ENCODE measurements at regions of chr19 and their contacts with region 1.

Region 1: GRCh38 chr19:4791170-4792018 is at the start of gene FEM1A:
- DNase-seq: peak; percentile 98
- H3K4me3 Mint-ChIP-seq: peak within 1 kb of the TSS; percentile 89
- H3K27ac Mint-ChIP-seq: peak within 1 kb of the TSS; percentile 88
- H3K4me1 Mint-ChIP-seq: peaks cover 9% of the 10 kb centered on the region
- H3K27me3 Mint-ChIP-seq: no peaks in the 10 kb centered on the region
- total RNA-seq, gene FEM1A: 23.8 and 24.8 TPM in 2 replicates

Region 2: DNA sequence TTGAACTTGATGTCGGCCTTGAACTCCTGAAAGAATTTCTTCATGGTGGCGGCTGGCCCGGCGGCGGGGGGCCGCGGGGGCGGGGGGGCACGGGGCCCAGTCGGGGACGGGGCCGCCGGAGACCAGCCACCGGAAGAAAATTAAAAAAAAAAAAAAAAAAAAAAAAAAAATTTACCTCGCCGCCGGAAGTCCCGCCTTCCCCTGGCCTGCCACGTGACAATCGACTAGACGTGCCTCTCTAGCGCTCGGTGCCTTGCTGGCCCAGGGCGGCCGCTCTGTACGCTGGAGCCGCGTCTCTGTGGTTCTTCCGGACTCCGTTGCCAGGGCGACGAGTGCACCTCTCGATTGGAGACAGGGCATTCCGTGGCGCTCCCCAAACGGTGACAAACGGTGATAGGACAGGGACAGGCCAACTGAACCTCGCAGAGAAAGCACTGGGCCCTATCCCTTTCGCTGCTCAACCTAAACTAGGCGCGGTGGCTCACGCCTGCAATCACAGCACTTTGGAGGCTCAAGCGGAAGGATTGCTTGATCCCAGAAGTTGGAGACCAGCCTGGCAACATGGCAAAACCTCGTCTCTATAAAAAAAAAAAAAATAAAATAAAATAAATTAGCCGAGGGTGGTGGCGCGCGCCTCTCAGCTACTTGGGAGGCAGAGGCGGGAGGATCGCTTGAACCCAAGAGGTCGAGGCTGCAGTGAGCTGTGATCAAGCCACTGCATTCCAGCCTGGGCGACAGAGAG is 333.6 kb before region 1 on chr19 and contains the start of gene UBXN6:
- intact Hi-C with region 1: no loop called
- DNase-seq: peak; percentile 98
- H3K4me3 Mint-ChIP-seq: peak within 1 kb of the TSS; percentile 92
- H3K27ac Mint-ChIP-seq: peak within 1 kb of the TSS; percentile 94
- H3K4me1 Mint-ChIP-seq: peaks cover 11% of the 10 kb centered on the region
- H3K27me3 Mint-ChIP-seq: peaks cover 2% of the 10 kb centered on the region
- total RNA-seq, gene UBXN6: 49.5 and 51.0 TPM in 2 replicates

Region 3: GRCh38 chr19:4669723-4670480 is 121.5 kb before region 1 on chr19 and contains the start of gene MYDGF:
- intact Hi-C with region 1: loop called (anchors 1 kb)
- DNase-seq: peak; percentile 91
- H3K4me3 Mint-ChIP-seq: peak within 1 kb of the TSS; percentile 91
- H3K27ac Mint-ChIP-seq: peak within 1 kb of the TSS; percentile 77
- H3K4me1 Mint-ChIP-seq: peaks cover 5% of the 10 kb centered on the region
- H3K27me3 Mint-ChIP-seq: no peaks in the 10 kb centered on the region
- total RNA-seq, gene MYDGF: 97.1 and 98.0 TPM in 2 replicates

Region 4: GRCh38 chr19:4732680-4733114 is 58.7 kb before region 1 on chr19:
- intact Hi-C with region 1: loop called (anchors 1 kb)
- DNase-seq: peak; percentile 47
- H3K4me3 Mint-ChIP-seq: peak overlapping the region; percentile 13
- H3K27ac Mint-ChIP-seq: no peak overlapping the region
- H3K4me1 Mint-ChIP-seq: peaks cover 15% of the 10 kb centered on the region
- H3K27me3 Mint-ChIP-seq: peaks cover 7% of the 10 kb centered on the region

Region 5: GRCh38 chr19:4768934-4769777 is 22.2 kb before region 1 on chr19:
- intact Hi-C with region 1: loop called (anchors 1 kb)
- DNase-seq: peak; percentile 77
- H3K4me3 Mint-ChIP-seq: no peak overlapping the region
- H3K27ac Mint-ChIP-seq: no peak overlapping the region
- H3K4me1 Mint-ChIP-seq: no peaks in the 10 kb centered on the region
- H3K27me3 Mint-ChIP-seq: peaks cover 5% of the 10 kb centered on the region

Region 6: GRCh38 chr19:4815426-4816201 is 24.2 kb after region 1 on chr19:
- intact Hi-C with region 1: loop called (anchors 1 kb)
- DNase-seq: peak; percentile 66
- H3K4me3 Mint-ChIP-seq: peak overlapping the region; percentile 63
- H3K27ac Mint-ChIP-seq: peak overlapping the region; percentile 67
- H3K4me1 Mint-ChIP-seq: peaks cover 24% of the 10 kb centered on the region
- H3K27me3 Mint-ChIP-seq: no peaks in the 10 kb centered on the region